Heart right ventricle (tissue), 16 donors: ENCODE measurements at regions of chr9 and their contacts with region 1.

Region 1: DNA sequence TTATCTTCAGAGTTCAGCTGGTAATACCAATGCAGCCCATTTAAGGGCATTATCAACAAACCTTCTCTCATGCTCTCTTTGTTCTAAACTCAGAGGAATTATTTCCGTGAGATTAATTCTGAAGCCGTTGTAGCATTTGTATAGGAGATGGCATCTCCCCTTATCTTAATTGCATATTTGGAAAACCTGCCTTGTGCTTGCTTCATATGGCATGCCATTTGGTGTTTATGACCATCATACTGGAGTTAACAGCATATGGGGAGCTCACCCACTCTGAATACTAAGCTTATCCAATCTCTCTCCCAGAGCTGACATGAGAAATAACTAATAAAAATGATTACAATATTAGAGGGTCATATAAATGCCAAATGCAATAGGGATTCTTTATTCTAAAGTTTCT is 243.2 kb downstream of the BRINP1 start:
- DNase-seq: no peak
- ATAC-seq: no peak
- H3K4me3 ChIP-seq: no peak overlapping the region
- H3K27ac ChIP-seq: no peak overlapping the region
- H3K4me1 ChIP-seq: no peaks in the 10 kb centered on the region
- H3K27me3 ChIP-seq: no peaks in the 10 kb centered on the region
- CTCF ChIP-seq: no peak

Region 2: DNA sequence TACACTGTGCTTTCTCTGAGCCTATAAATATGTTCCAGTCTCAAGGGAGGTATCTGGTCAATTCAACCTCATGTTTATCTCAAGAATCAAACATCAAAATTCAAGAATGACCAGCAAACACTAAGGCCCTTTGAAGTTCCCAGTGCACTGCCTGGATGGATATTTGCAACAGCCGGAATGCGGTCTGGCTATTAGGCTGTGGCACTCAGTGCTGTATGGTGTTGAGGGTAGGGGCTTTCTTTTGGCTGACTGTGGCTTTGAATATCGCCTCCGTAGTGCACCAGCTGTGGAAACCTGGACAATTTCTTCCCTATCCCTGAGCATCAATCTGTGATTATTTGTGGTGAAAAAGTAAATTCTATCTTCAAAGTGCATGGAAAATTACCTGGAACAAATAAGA is 22.8 kb after region 1 on chr9:
- intact Hi-C with region 1: loop called in 1 of 10 experiments (anchors 1 kb)
- DNase-seq: no peak
- ATAC-seq: no peak
- H3K4me3 ChIP-seq: no peak overlapping the region
- H3K27ac ChIP-seq: no peak overlapping the region
- H3K4me1 ChIP-seq: no peaks in the 10 kb centered on the region
- H3K27me3 ChIP-seq: no peaks in the 10 kb centered on the region
- CTCF ChIP-seq: no peak